ENCODE measurements at regions of chr16 and their contacts with region 1.

Region 1: DNA sequence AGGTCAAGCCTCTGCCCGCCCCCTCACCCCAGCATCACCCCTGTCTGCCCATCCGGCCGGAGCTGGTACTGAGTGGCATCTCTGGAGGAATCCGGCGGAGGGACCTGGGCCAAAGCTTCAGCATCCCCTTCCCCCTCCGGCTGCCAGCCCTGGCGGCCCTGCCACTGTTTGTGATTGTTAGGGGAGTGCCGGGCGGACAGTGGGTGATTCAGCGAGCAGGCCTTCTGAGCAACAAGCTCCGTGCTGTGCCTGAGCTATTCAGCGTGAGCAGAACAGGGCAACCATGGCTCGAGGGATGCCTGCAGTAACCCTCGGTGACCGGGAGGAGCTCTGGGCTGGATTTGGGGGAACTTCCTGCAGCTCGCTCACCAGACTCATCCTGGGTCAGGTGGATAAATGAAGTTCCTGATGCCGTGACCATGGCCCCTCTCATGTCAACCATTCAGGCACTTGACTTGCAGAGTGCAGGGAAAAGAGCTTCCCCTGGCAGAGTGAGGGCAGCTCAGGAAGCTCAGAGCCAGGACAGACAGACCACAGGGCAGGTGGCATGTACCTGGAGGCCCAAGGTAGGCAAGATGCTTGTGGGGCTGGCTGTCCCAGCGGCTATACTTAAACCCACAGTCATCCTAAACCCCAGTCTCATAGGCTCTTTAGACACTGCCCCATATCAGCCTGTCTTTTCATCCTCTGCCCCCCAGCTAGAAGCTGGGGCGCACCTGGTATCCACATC is 24.3 kb upstream of the MLKL start:
- DNase-seq: peak; percentile 87
- H3K4me3 ChIP-seq: no peak overlapping the region
- H3K27ac ChIP-seq: peak overlapping the region; percentile 23
- H3K4me1 ChIP-seq: peaks cover 27% of the 10 kb centered on the region
- H3K27me3 ChIP-seq: no peaks in the 10 kb centered on the region
- CTCF ChIP-seq: peak; percentile 61 to 69

Region 2: GRCh38 chr16:74738134-74738541 is 13.2 kb after region 1 on chr16:
- CTCF ChIA-PET with region 1: interaction called, 3 read pairs
- dilution Hi-C with region 1: no loop called
- in situ Hi-C with region 1: no loop called
- intact Hi-C with region 1: loop called (anchors 1 kb)
- DNase-seq: no peak
- H3K4me3 ChIP-seq: no peak overlapping the region
- H3K27ac ChIP-seq: no peak overlapping the region
- H3K4me1 ChIP-seq: peaks cover 37% of the 10 kb centered on the region
- H3K27me3 ChIP-seq: no peaks in the 10 kb centered on the region
- CTCF ChIP-seq: no peak

Region 3: GRCh38 chr16:74793571-74793970 is 68.6 kb after region 1 on chr16:
- CTCF ChIA-PET with region 1: no interaction called
- dilution Hi-C with region 1: no loop called
- in situ Hi-C with region 1: no loop called
- intact Hi-C with region 1: no loop called
- DNase-seq: peak; percentile 17
- H3K4me3 ChIP-seq: no peak overlapping the region
- H3K27ac ChIP-seq: no peak overlapping the region
- H3K4me1 ChIP-seq: no peaks in the 10 kb centered on the region
- H3K27me3 ChIP-seq: no peaks in the 10 kb centered on the region
- CTCF ChIP-seq: no peak

Measured in mammary epithelial cell (primary cell).